SK-N-SH (cell line): ENCODE measurements at regions of chr5 and their contacts with region 1.

Region 1: DNA sequence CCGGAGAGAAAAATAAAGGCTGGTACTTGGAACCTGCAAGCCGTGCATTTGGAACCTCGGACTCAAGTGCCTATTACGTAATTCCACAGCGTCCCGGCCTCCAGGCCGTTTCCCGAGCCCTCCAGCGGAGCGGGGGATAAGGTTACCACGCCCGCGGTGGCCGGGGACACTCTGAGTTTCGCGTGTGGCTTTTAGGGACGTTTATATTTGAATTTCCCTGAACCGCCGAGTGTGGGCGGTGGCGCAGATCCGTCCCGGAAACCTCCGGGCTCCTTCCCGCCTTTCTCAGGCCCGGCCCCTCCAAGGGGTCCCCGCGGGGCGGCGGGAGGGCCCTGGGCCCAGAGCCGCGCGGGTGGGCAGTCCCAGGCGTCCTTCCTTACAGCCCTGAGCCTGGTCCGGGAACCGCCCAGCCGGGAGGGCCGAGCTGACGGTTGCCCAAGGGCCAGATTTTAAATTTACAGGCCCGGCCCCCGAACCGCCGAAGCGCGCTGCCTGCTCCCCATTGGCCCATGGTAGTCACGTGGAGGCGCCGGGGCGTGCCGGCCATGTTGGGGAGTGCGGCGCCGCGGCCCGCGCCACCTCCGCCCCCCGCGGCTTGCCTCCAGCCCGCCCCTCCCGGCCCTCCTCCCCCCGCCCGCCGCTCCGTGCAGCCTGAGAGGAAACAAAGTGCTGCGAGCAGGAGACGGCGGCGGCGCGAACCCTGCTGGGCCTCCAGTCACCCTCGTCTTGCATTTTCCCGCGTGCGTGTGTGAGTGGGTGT is at the start of gene LMNB1:
- DNase-seq: peak; percentile 95
- H3K4me3 ChIP-seq: peak within 1 kb of the TSS; percentile 80 to 83
- H3K27ac ChIP-seq: peak within 1 kb of the TSS; percentile 90 to 94
- H3K4me1 ChIP-seq: peaks cover 4% of the 10 kb centered on the region in 2 experiments; a peak in 3 of 4 replicates
- H3K27me3 ChIP-seq: no peaks in the 10 kb centered on the region
- CTCF ChIP-seq: no peak
- EP300 ChIP-seq: peak; percentile 11 to 84; a peak in 2 of 4 replicates
- RAD21 ChIP-seq: no peak
- polyA plus RNA-seq, gene LMNB1: 20.8 and 34.9 TPM in 2 replicates

Region 2: GRCh38 chr5:126794157-126794828 is 17.6 kb after region 1 on chr5:
- CTCF ChIA-PET with region 1: interaction called, 15 read pairs
- POLR2A ChIA-PET with region 1: interaction called, 4 read pairs
- DNase-seq: no peak
- H3K4me3 ChIP-seq: no peak overlapping the region
- H3K27ac ChIP-seq: no peak overlapping the region; a peak in 2 of 4 replicates
- H3K4me1 ChIP-seq: peaks cover 0 to 6% of the 10 kb centered on the region in 2 experiments; a peak in 1 of 4 replicates
- H3K27me3 ChIP-seq: no peaks in the 10 kb centered on the region
- CTCF ChIP-seq: no peak
- EP300 ChIP-seq: no peak
- RAD21 ChIP-seq: no peak

Region 3: GRCh38 chr5:126801992-126802294 is 25.3 kb after region 1 on chr5:
- CTCF ChIA-PET with region 1: interaction called, 15 read pairs
- POLR2A ChIA-PET with region 1: no interaction called
- DNase-seq: peak; percentile 24
- H3K4me3 ChIP-seq: no peak overlapping the region
- H3K27ac ChIP-seq: 0 out of 4 replicates have a peak overlapping the region, but pooled peaks of 1 of the 2 experiments have one; percentile 1
- H3K4me1 ChIP-seq: peaks cover 0 to 19% of the 10 kb centered on the region in 2 experiments; a peak in 1 of 4 replicates
- H3K27me3 ChIP-seq: no peaks in the 10 kb centered on the region
- CTCF ChIP-seq: peak; percentile 68
- EP300 ChIP-seq: no peak
- RAD21 ChIP-seq: peak; percentile 70